Heart left ventricle (tissue), 16 donors: ENCODE measurements at regions of chr3 and their contacts with region 1.

Region 1: GRCh38 chr3:43286115-43286840 is at the start of gene SNRK:
- DNase-seq: peak; percentile 90 to 97 (median 93)
- ATAC-seq: peak; percentile 80 to 97 (median 90)
- H3K4me3 ChIP-seq: peak within 1 kb of the TSS; percentile 60 to 84 (median 74)
- H3K27ac ChIP-seq: peak within 1 kb of the TSS; percentile 56 to 97 (median 92)
- H3K4me1 ChIP-seq: peaks cover 18 to 56% (median 41%) of the 10 kb centered on the region in 12 donors
- H3K27me3 ChIP-seq: no peaks in the 10 kb centered on the region
- CTCF ChIP-seq: peak in 11 of 12 donors; percentile 10 to 59 (median 38)
- POLR2A ChIP-seq: peak; percentile 85 to 95
- total RNA-seq, gene SNRK: 16.8 to 41.5 (median 23.8) TPM

Region 2: GRCh38 chr3:43162230-43163084 is 123.8 kb before region 1 on chr3:
- intact Hi-C with region 1: loop called in 8 of 10 experiments (anchors 2 to 10 kb)
- DNase-seq: no peak
- ATAC-seq: peak in 3 of 4 donors; percentile 51 to 81 (median 65)
- H3K4me3 ChIP-seq: peak overlapping the region in 7 of 12 donors; percentile 3 to 19 (median 11)
- H3K27ac ChIP-seq: peak overlapping the region in 7 of 12 donors; percentile 38 to 73 (median 59)
- H3K4me1 ChIP-seq: peaks cover 0 to 16% (median 10%) of the 10 kb centered on the region in 12 donors
- H3K27me3 ChIP-seq: no peaks in the 10 kb centered on the region
- CTCF ChIP-seq: peak; percentile 30 to 68 (median 57)
- POLR2A ChIP-seq: no peak

Region 3: DNA sequence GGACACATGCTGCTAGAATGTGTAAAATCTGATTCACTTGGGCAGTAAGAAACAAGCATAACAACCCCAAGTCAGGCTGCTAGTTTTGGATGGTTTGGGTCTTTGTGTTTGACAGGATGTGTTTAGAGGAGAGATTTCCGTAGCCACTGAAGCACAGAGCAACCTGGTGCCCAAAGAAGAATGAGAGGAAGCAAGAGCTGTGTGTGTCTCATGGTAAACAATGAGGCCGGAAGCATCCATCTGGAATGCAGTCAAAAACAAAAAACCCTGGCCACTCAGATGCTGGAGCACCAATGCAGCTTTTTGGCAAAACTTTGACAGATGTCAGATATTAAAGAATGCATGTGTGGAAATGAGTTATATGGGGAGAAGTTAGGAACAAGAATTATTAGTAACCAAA is 39.3 kb before region 1 on chr3:
- intact Hi-C with region 1: loop called in 3 of 10 experiments (anchors 5 kb)
- DNase-seq: peak in 3 of 5 donors; percentile 42 to 61 (median 51)
- ATAC-seq: peak; percentile 61 to 90 (median 78)
- H3K4me3 ChIP-seq: no peak overlapping the region
- H3K27ac ChIP-seq: peak overlapping the region in 9 of 12 donors; percentile 47 to 85 (median 66)
- H3K4me1 ChIP-seq: peaks cover 0 to 60% (median 21%) of the 10 kb centered on the region in 12 donors
- H3K27me3 ChIP-seq: no peaks in the 10 kb centered on the region
- CTCF ChIP-seq: no peak
- POLR2A ChIP-seq: no peak

Region 4: DNA sequence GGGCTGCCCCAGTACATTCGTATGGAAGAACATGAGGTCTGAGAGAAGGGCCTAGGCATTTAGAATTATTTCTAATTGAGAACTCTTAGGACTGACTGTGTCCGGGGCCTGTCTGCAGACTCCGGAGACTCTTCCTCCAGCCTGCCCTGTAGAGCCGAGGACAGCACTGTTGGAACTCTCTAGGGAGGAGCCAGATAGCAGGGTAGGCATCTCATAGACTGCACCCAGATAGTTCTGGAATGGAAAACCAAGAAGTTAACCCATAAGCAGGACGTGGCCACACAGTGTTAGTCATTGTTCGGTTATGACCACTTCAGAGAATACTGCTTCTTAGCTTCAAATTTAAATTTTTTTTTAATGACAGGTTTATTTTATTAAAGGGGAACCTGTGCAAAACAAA is 59.6 kb after region 1 on chr3:
- intact Hi-C with region 1: loop called in 1 of 10 experiments (anchors 5 kb)
- DNase-seq: no peak
- ATAC-seq: peak in 3 of 4 donors; percentile 10 to 44 (median 16)
- H3K4me3 ChIP-seq: no peak overlapping the region
- H3K27ac ChIP-seq: peak overlapping the region in 2 of 12 donors; percentile 25 to 59
- H3K4me1 ChIP-seq: peaks cover 0 to 50% (median 22%) of the 10 kb centered on the region in 12 donors
- H3K27me3 ChIP-seq: no peaks in the 10 kb centered on the region
- CTCF ChIP-seq: no peak
- POLR2A ChIP-seq: no peak

Region 5: GRCh38 chr3:43497905-43498365 is 211.7 kb after region 1 on chr3:
- intact Hi-C with region 1: loop called in 9 of 10 experiments (anchors 2 to 5 kb)
- DNase-seq: no peak
- ATAC-seq: peak in 3 of 4 donors; percentile 38 to 63 (median 41)
- H3K4me3 ChIP-seq: no peak overlapping the region
- H3K27ac ChIP-seq: peak overlapping the region in 6 of 12 donors; percentile 11 to 58 (median 50)
- H3K4me1 ChIP-seq: peaks cover 0 to 44% (median 19%) of the 10 kb centered on the region in 12 donors
- H3K27me3 ChIP-seq: no peaks in the 10 kb centered on the region
- CTCF ChIP-seq: no peak
- POLR2A ChIP-seq: no peak

Region 6: DNA sequence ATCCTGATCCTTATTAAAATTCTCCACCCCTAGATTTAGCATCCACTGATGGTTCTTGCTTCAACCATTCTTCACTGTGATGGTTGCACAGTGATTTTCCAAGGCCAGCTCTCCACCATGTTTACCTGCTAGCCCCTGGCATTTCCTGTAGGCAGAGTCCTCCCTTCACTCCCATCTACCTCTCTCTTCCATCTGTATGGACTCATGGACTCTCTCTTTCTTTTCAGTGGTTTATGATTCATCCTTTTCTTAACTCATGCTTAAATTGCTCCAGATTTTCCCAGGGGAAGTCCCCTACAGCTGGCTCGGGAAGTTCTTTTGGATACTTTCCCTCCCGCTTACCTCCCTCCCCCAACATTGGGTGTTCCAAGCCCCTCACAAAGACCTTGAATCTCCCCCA is 1606.8 kb after region 1 on chr3:
- intact Hi-C with region 1: no loop called
- DNase-seq: no peak
- ATAC-seq: no peak
- H3K4me3 ChIP-seq: no peak overlapping the region
- H3K27ac ChIP-seq: no peak overlapping the region
- H3K4me1 ChIP-seq: no peaks in the 10 kb centered on the region
- H3K27me3 ChIP-seq: peaks cover 0 to 3% (median 0%) of the 10 kb centered on the region in 9 donors
- CTCF ChIP-seq: no peak
- POLR2A ChIP-seq: no peak